IMR-90 (cell line): ENCODE measurements at regions of chr3 and their contacts with region 1.

Region 1: DNA sequence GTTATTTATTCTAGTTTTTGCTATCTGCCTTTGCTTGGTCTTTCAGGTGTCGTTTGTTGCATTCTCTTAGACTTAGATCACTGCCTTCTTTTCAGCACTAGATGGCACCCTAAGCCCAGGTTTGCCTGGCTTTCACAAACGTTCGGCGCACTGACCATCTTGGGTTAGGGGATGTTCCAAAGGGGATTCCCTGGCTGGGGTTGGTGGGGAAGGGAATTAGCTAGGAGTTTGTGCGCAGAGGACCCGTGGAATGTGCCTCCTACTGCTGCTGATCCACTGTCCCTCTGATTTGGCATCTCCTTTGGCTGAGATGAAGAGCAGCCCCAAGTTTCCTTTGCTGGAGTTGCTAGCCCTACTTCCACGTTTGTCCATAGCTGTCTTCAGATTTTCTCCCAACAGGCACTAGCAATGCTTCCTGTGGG is 33.9 kb downstream of the PFN2 start:
- DNase-seq: peak; percentile 62
- ATAC-seq: peak; percentile 79
- H3K4me3 ChIP-seq: no peak overlapping the region
- H3K27ac ChIP-seq: no peak overlapping the region
- H3K4me1 ChIP-seq: no peaks in the 10 kb centered on the region
- H3K27me3 ChIP-seq: no peaks in the 10 kb centered on the region
- CTCF ChIP-seq: peak; percentile 80
- POLR2A ChIP-seq: peak; percentile 50; the same call in 1 of the 2 replicates
- RAD21 ChIP-seq: peak; percentile 89

Region 2: GRCh38 chr3:149536429-149536828 is 400.4 kb before region 1 on chr3:
- CTCF ChIA-PET with region 1: no interaction called
- POLR2A ChIA-PET with region 1: no interaction called
- dilution Hi-C with region 1: no loop called
- in situ Hi-C with region 1: no loop called
- intact Hi-C with region 1: no loop called
- DNase-seq: no peak
- ATAC-seq: no peak
- H3K4me3 ChIP-seq: no peak overlapping the region
- H3K27ac ChIP-seq: peak overlapping the region; percentile 27; the same call in 1 of the 2 replicates
- H3K4me1 ChIP-seq: peaks cover 31% of the 10 kb centered on the region
- H3K27me3 ChIP-seq: no peaks in the 10 kb centered on the region
- CTCF ChIP-seq: no peak
- POLR2A ChIP-seq: no peak
- RAD21 ChIP-seq: no peak

Region 3: GRCh38 chr3:149726716-149727407 is 210.0 kb before region 1 on chr3:
- CTCF ChIA-PET with region 1: no interaction called
- POLR2A ChIA-PET with region 1: no interaction called
- dilution Hi-C with region 1: no loop called
- in situ Hi-C with region 1: no loop called
- intact Hi-C with region 1: no loop called
- DNase-seq: peak; percentile 10
- ATAC-seq: no peak; the same call in 1 of the 2 replicates
- H3K4me3 ChIP-seq: no peak overlapping the region
- H3K27ac ChIP-seq: no peak overlapping the region
- H3K4me1 ChIP-seq: no peaks in the 10 kb centered on the region
- H3K27me3 ChIP-seq: peaks cover 1% of the 10 kb centered on the region; the same call in 1 of the 2 replicates
- CTCF ChIP-seq: no peak
- POLR2A ChIP-seq: no peak
- RAD21 ChIP-seq: no peak

Region 4: DNA sequence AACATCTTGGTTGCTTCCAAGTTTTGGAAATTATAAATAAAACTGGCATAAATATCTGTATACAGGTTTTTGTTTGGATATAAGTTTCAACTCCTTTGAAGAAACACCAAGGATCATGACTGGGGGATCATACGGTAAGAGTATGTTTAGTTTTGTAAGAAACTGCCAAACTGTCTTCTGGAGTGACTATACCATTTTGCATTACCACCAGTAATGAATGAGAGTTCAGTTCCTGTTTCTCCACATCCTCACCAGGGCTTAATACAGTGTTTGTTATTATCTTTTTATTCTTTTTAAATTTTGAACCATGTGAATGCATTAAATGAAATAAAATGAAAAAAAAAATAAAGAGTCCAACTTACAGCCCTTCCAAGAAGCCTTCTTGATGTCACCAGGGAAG is 140.8 kb before region 1 on chr3:
- CTCF ChIA-PET with region 1: no interaction called
- POLR2A ChIA-PET with region 1: no interaction called
- dilution Hi-C with region 1: no loop called
- in situ Hi-C with region 1: no loop called
- intact Hi-C with region 1: no loop called
- DNase-seq: no peak
- ATAC-seq: no peak
- H3K4me3 ChIP-seq: no peak overlapping the region
- H3K27ac ChIP-seq: no peak overlapping the region
- H3K4me1 ChIP-seq: no peaks in the 10 kb centered on the region
- H3K27me3 ChIP-seq: no peaks in the 10 kb centered on the region
- CTCF ChIP-seq: no peak
- POLR2A ChIP-seq: no peak
- RAD21 ChIP-seq: no peak

Region 5: GRCh38 chr3:149969940-149970715 is 33.3 kb after region 1 on chr3:
- CTCF ChIA-PET with region 1: interaction called, 3 read pairs
- POLR2A ChIA-PET with region 1: interaction called, 3 read pairs
- dilution Hi-C with region 1: no loop called
- in situ Hi-C with region 1: no loop called
- intact Hi-C with region 1: loop called (anchors 1 kb)
- DNase-seq: peak; percentile 90
- ATAC-seq: peak; percentile 46
- H3K4me3 ChIP-seq: peak overlapping the region; percentile 95
- H3K27ac ChIP-seq: peak overlapping the region; percentile 93
- H3K4me1 ChIP-seq: peaks cover 5% of the 10 kb centered on the region
- H3K27me3 ChIP-seq: no peaks in the 10 kb centered on the region
- CTCF ChIP-seq: no peak
- POLR2A ChIP-seq: no peak
- RAD21 ChIP-seq: no peak

Region 6: DNA sequence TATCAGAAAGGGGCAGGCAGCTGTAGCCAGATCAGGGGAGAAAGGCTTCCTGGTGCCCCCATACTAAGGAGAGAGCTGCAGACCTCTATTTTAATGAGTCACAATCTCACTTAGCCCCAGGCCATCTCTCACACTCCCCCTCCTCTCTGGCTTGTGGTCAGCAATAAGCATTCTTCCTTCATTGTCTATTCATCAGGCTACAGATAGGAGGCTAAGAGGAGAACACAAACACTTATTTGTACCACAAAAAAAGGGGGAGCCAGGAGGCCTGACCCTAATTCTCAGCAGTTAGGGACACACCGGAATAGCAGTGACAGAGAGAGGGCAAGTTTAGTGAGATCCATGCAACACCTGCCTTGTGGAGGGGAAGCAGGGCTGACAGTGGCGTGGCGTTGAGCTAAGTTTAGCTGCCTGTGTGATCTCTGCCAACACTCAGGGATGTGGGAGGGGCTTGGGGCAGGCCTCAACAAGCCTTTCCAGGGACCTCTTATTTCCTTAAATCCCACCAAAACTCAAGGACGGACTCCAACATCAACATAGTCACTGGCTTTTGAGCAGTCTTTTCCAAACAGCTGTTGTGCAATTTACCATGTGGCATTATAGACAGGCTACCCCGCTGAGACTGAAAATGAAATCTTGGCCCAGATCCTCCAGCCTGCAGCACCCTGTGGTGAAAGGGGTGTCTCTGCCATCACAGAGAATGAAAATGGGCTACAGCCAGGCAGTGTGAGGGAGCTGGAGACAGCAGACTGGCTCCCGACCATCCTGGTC is 279.4 kb after region 1 on chr3:
- CTCF ChIA-PET with region 1: interaction called, 5 read pairs
- POLR2A ChIA-PET with region 1: no interaction called
- dilution Hi-C with region 1: no loop called
- in situ Hi-C with region 1: no loop called
- intact Hi-C with region 1: loop called (anchors 1 kb)
- DNase-seq: peak; percentile 61
- ATAC-seq: peak; percentile 50
- H3K4me3 ChIP-seq: no peak overlapping the region
- H3K27ac ChIP-seq: peak overlapping the region; percentile 49; the same call in 1 of the 2 replicates
- H3K4me1 ChIP-seq: peaks cover 6% of the 10 kb centered on the region
- H3K27me3 ChIP-seq: peaks cover under 1% of the 10 kb centered on the region; the same call in 1 of the 2 replicates
- CTCF ChIP-seq: no peak
- POLR2A ChIP-seq: no peak
- RAD21 ChIP-seq: no peak; the same call in 1 of the 2 replicates

Region 7: GRCh38 chr3:150503402-150504099 is 566.7 kb after region 1 on chr3:
- CTCF ChIA-PET with region 1: no interaction called
- POLR2A ChIA-PET with region 1: no interaction called
- dilution Hi-C with region 1: no loop called
- in situ Hi-C with region 1: loop called (anchors 10 kb)
- intact Hi-C with region 1: no loop called
- DNase-seq: no peak
- ATAC-seq: no peak
- H3K4me3 ChIP-seq: no peak overlapping the region
- H3K27ac ChIP-seq: no peak overlapping the region
- H3K4me1 ChIP-seq: no peaks in the 10 kb centered on the region
- H3K27me3 ChIP-seq: peaks cover 4% of the 10 kb centered on the region; the same call in 1 of the 2 replicates
- CTCF ChIP-seq: no peak
- POLR2A ChIP-seq: no peak
- RAD21 ChIP-seq: no peak